A673 (cell line): ENCODE measurements at regions of chr19 and their contacts with region 1.

Region 1: DNA sequence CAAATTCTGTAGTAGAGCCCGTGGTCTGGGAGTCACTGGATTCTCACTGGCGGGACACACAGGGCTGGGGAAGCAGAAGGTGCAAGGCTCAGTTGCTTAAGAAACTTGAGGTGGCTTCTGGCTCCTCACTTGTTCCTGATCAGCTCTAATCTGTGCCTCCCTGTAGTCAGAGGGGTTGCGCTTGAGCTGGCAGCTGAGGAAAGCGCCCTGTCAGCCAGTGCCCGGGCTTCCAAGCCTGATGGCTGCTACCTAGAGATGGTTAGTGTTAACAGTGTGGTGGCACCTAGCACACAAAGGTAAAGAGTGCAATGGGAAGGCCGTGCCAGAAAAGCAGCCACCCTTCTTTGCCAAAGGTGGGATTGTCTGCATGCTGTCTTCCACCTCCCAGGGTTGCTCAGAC is 8.8 kb downstream of the HNRNPM start:
- DNase-seq: no peak
- H3K4me3 ChIP-seq: no peak overlapping the region
- H3K27ac ChIP-seq: no peak overlapping the region
- H3K4me1 ChIP-seq: peaks cover 22% of the 10 kb centered on the region
- H3K27me3 ChIP-seq: no peaks in the 10 kb centered on the region
- CTCF ChIP-seq: no peak

Region 2: GRCh38 chr19:8552810-8553209 is 99.2 kb after region 1 on chr19:
- CTCF ChIA-PET with region 1: no interaction called
- POLR2A ChIA-PET with region 1: no interaction called
- intact Hi-C with region 1: no loop called
- DNase-seq: peak; percentile 80
- H3K4me3 ChIP-seq: no peak overlapping the region
- H3K27ac ChIP-seq: no peak overlapping the region
- H3K4me1 ChIP-seq: no peaks in the 10 kb centered on the region
- H3K27me3 ChIP-seq: no peaks in the 10 kb centered on the region
- CTCF ChIP-seq: no peak

Region 3: DNA sequence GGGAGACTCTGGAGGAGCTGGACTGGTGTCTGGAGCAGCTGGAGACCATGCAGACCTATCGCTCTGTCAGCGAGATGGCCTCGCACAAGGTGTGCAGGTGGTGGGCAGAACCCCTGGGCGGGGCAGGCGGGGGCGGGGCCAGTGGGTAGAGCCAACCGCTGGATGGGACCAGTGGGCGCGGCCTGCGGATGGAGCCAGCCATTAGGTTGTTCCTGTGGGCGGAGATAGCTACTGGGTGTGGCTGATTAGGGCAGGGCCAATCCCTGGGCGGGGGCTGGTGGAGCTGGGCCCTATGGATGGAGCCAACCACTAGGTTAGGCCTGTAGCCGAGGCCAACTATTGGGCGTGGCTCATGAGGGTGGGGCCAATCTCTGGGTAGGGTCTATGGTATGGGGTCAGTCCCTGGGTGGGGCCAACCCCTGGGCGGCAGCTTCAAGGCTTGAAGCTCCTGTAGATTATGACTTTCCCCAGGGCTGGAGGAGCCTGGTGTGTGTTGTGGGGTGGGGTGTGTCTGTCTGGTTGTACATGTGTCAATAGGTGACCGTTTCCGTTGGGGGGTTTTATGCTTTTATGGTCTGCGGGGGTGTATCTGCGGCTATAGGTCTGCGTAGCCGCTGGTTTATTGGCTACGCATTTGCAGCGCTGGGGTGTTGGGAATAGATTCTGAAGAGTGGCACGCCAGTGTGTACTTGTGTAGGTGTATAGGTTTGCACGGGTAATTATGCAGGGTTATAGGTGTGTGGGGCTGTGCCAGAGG is 1997.4 kb after region 1 on chr19:
- CTCF ChIA-PET with region 1: no interaction called
- POLR2A ChIA-PET with region 1: interaction called, 22 read pairs
- intact Hi-C with region 1: no loop called
- DNase-seq: peak; percentile 60
- H3K4me3 ChIP-seq: no peak overlapping the region
- H3K27ac ChIP-seq: no peak overlapping the region
- H3K4me1 ChIP-seq: peaks cover 5% of the 10 kb centered on the region
- H3K27me3 ChIP-seq: no peaks in the 10 kb centered on the region
- CTCF ChIP-seq: no peak